PC-9 (cell line): ENCODE measurements at regions of chr3 and their contacts with region 1.

Region 1: GRCh38 chr3:58324391-58325390 is 8.0 kb upstream of the PXK start:
- DNase-seq: no peak
- H3K4me3 ChIP-seq: no peak overlapping the region
- H3K27ac ChIP-seq: no peak overlapping the region
- H3K4me1 ChIP-seq: no peaks in the 10 kb centered on the region
- H3K27me3 ChIP-seq: no peaks in the 10 kb centered on the region
- CTCF ChIP-seq: no peak

Region 2: GRCh38 chr3:58414538-58415197 is 90.0 kb after region 1 on chr3:
- CTCF ChIA-PET with region 1: no interaction called
- POLR2A ChIA-PET with region 1: no interaction called
- intact Hi-C with region 1: loop called (anchors 1 kb)
- DNase-seq: peak; percentile 34 to 50
- H3K4me3 ChIP-seq: no peak overlapping the region
- H3K27ac ChIP-seq: no peak overlapping the region
- H3K4me1 ChIP-seq: peaks cover 5% of the 10 kb centered on the region; the same call in 1 of the 2 replicates
- H3K27me3 ChIP-seq: no peaks in the 10 kb centered on the region
- CTCF ChIP-seq: peak; percentile 82

Region 3: DNA sequence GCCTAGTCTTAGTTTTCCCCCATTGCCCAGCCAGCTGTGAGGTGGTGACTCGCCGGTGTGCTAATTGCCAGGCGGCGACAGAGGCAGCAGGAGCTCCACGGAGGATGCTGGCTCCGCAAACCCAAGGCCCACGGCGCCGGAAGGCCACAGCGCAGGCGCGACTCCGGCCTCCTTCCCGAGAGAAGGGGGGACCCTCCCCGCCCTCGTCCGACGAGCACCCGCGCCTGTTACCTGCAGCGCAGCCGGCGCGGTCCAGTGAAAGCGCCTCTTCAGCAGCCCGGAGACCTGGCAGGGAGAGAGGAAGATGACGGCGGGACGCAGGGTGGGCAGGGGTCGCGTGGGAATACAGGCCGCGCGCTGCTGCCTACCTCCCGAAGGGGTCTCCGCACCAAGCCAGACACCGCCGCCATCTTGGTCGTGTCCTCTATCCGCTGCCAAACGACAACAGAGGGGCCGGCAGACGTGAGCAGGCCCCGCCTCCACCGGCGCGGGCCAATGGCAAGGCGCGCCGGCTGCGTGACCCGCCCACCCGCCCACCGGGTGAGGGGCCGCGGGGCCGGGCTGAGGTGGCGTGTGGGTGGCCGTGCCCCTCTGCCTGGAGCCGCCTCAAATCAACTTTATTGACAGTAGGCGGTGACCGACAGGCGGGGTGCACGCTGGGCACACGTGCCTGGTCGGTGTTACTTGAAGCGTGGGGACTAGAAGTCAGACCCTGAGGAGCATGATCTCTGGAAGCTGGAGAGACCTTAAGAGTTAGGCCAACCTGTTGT is 108.9 kb after region 1 on chr3 and contains the start of gene PDHB:
- CTCF ChIA-PET with region 1: no interaction called
- POLR2A ChIA-PET with region 1: no interaction called
- intact Hi-C with region 1: no loop called
- DNase-seq: peak; percentile 67 to 87
- H3K4me3 ChIP-seq: peak within 1 kb of the TSS; percentile 84
- H3K27ac ChIP-seq: no peak within 1 kb of the TSS
- H3K4me1 ChIP-seq: peaks cover 13% of the 10 kb centered on the region
- H3K27me3 ChIP-seq: no peaks in the 10 kb centered on the region
- CTCF ChIP-seq: no peak; the same call in 1 of the 2 replicates
- total RNA-seq, gene PDHB: 69.8 and 70.7 TPM in 2 replicates

Region 4: GRCh38 chr3:58463181-58463941 is 138.7 kb after region 1 on chr3:
- CTCF ChIA-PET with region 1: no interaction called
- POLR2A ChIA-PET with region 1: no interaction called
- intact Hi-C with region 1: loop called (anchors 5 kb)
- DNase-seq: peak; percentile 71 to 77
- H3K4me3 ChIP-seq: no peak overlapping the region
- H3K27ac ChIP-seq: no peak overlapping the region
- H3K4me1 ChIP-seq: peaks cover 29% of the 10 kb centered on the region
- H3K27me3 ChIP-seq: no peaks in the 10 kb centered on the region
- CTCF ChIP-seq: peak; percentile 85